ENCODE measurements at regions of chr1 and their contacts with region 1.

Region 1: DNA sequence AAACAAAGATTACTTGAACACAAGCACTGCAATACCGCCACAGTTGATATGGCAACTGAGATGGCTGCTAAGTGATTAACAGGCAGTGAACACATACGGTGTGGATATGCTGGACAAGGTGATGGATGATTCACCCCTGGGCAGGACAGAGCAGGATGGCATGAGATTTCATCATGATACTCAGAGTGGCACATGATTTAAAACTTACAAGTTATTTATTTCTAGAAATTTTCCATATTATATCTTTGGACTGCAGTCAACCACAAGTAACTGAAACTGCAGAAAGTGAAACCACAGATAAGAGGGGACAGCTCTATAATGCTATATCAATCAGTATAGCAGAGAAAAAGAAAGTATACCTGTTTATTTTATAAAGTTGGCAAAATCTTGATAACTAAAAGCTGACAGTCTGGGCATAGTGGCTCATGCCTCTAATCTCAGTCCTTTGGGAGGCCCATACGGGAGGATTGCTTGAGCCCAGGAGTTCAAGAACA is 47.9 kb downstream of the PHACTR4 start:
- DNase-seq: no peak
- H3K4me3 Mint-ChIP-seq: peak overlapping the region; percentile 13
- H3K27ac Mint-ChIP-seq: peak overlapping the region; percentile 38
- H3K4me1 Mint-ChIP-seq: peaks cover 18% of the 10 kb centered on the region
- H3K27me3 Mint-ChIP-seq: no peaks in the 10 kb centered on the region

Region 2: DNA sequence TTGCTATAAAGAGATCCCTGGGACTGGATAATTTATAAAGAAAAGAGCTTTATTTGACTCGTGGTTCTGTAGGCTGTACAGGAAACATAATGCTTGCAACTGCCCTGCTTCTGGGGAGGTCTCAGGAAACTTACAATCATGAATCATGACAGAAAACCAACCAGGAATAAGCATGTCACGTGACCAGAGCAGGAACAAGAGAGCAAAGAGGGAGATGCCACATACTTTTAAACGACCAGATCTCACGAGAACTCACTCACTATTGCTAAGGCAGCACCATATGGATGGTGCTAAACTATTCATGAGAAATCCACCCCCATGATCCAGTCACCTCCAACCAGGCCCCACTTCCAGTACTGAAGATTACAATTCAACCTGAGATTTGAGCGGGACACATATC is 38.6 kb after region 1 on chr1:
- intact Hi-C with region 1: loop called (anchors 5 kb)
- DNase-seq: peak; percentile 27
- H3K4me3 Mint-ChIP-seq: peak overlapping the region; percentile 19
- H3K27ac Mint-ChIP-seq: peak overlapping the region; percentile 87
- H3K4me1 Mint-ChIP-seq: peaks cover 33% of the 10 kb centered on the region
- H3K27me3 Mint-ChIP-seq: no peaks in the 10 kb centered on the region

Region 3: DNA sequence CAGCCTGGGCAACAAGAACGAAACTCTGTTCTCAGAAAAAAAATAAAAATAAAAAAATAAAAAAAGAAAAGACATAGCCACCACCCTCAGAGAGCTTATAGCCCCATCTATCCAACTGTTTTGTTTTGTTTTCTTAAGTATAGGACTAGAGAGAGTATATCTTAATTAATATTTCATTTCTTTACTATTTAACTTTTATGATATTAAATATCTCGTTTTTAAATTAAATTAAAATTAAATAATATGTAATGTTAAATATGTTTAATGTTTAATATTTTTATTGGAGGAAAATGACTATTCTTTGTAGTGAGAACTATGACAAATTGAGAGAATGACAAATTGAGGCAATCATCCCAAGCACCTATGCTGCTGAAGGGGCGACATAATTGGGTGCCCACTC is 286.2 kb after region 1 on chr1:
- intact Hi-C with region 1: no loop called
- DNase-seq: no peak
- H3K4me3 Mint-ChIP-seq: no peak overlapping the region
- H3K27ac Mint-ChIP-seq: no peak overlapping the region
- H3K4me1 Mint-ChIP-seq: peaks cover 15% of the 10 kb centered on the region
- H3K27me3 Mint-ChIP-seq: no peaks in the 10 kb centered on the region

Measured in activated T-helper 2 cell treated with anti-CD3 and anti-CD28 coated beads, Interferon-gamma antibody, Interleukin-2, Interleukin-4, amounts not matched to agents 10 μg/mL and 5 μg/mL and 100 μg/mL, durations not matched to agents 14 hours and 24 hours and 36 hours (primary cell).